ENCODE measurements at regions of chr1 and their contacts with region 1.

Region 1: GRCh38 chr1:30911046-30911954 is 2.7 kb upstream of the SDC3 start:
- DNase-seq: peak; percentile 55 to 92
- H3K4me3 ChIP-seq: no peak overlapping the region
- H3K27ac ChIP-seq: no peak overlapping the region
- H3K4me1 ChIP-seq: peaks cover 6 to 14% of the 10 kb centered on the region in 2 donors
- H3K27me3 ChIP-seq: no peaks in the 10 kb centered on the region
- CTCF ChIP-seq: peak; percentile 85 to 89 (median 88)

Region 2: DNA sequence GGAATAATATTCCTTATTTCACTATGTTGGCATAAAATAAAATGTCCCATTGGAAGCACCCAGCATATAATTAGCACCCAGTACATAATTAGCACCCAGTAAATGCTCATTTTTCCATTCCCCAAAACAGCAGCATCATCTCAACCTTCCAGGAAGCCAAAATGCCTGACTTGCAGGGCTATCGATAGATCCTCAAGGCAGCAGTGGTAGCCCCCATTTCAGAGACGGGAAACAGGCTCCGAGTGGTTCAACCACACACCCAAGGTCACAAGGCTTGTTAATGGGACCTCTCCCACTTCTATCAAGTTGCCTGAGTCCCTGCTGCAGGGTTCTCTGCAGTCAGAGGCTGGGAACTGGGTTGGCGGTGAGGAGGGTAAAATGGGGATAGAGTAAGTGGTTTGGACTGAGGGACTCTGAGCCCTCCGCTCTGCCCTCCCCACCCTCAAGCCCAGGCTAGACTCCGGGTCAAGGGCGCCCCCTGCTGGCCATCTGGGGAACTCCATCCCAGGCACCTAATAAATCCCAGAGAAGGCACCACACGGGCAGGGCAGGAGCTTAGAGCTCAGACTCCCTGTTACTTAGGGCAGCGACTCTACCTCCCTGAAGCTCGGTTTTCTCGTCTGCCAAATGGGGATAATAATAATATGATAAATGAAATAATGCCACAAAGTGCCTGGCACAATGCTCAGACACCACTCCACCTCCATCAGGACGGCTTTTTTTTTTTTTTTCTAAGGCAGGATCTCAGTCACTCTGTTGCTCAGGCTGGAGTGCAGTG is 131.8 kb before region 1 on chr1:
- intact Hi-C with region 1: loop called (anchors 1 kb)
- DNase-seq: peak; percentile 72 to 93
- H3K4me3 ChIP-seq: no peak overlapping the region
- H3K27ac ChIP-seq: no peak overlapping the region
- H3K4me1 ChIP-seq: peaks cover 0 to 2% of the 10 kb centered on the region in 2 donors
- H3K27me3 ChIP-seq: no peaks in the 10 kb centered on the region
- CTCF ChIP-seq: peak; percentile 94 to 98 (median 94)

Region 3: GRCh38 chr1:30801771-30802198 is 109.5 kb before region 1 on chr1:
- intact Hi-C with region 1: loop called (anchors 1 kb)
- DNase-seq: peak in 1 of 2 donors; percentile 89
- H3K4me3 ChIP-seq: peak overlapping the region in 1 of 2 donors; percentile 38
- H3K27ac ChIP-seq: no peak overlapping the region
- H3K4me1 ChIP-seq: no peaks in the 10 kb centered on the region
- H3K27me3 ChIP-seq: no peaks in the 10 kb centered on the region
- CTCF ChIP-seq: peak; percentile 94 to 98 (median 95)

Region 4: DNA sequence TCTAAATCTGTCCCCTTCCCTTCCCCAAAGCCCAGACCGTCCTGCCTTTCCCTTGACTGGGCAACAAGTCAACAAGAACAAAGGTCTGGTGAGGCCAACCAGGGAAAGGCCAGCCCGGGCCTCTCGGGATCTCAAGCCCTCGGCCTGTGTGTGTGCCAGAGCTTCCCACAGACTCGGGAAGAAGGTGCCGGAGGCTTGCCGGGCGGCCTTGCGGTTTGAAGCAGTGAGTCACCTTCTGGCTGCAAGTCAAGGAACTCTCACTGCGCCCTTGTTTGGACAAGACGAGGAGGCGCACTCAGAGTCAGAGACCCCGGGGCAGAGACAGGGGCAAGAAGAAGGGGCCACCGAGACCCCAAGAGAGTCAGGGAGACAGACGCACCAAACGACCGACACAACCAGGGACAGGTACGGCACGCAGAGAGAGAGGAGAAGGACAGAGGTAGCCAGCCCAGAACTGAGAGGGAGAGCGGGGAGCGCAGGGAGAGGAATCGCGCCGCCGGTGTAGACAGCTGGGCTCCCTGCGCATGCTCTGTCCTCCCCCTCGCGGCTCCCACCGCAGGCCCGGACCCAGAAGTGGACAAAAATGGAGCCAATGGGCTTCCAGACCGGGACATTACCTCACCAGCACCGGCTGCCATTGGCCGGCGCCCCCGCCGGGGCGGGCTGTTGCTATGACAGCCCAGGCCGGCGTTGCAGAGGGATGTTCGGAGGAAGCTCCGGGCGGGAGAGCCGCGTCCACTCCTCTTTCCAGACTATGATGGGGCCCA is 87.1 kb before region 1 on chr1:
- intact Hi-C with region 1: loop called (anchors 1 kb)
- DNase-seq: peak; percentile 87 to 98
- H3K4me3 ChIP-seq: peak overlapping the region; percentile 46 to 58
- H3K27ac ChIP-seq: peak overlapping the region; percentile 95
- H3K4me1 ChIP-seq: peaks cover 4 to 13% of the 10 kb centered on the region in 2 donors
- H3K27me3 ChIP-seq: no peaks in the 10 kb centered on the region
- CTCF ChIP-seq: peak in 1 of 3 experiments; percentile 5

Region 5: GRCh38 chr1:30877205-30877912 is 33.9 kb before region 1 on chr1:
- intact Hi-C with region 1: loop called (anchors 5 kb)
- DNase-seq: peak; percentile 57 to 92
- H3K4me3 ChIP-seq: no peak overlapping the region
- H3K27ac ChIP-seq: peak overlapping the region; percentile 56 to 79
- H3K4me1 ChIP-seq: peaks cover 7 to 33% of the 10 kb centered on the region in 2 donors
- H3K27me3 ChIP-seq: no peaks in the 10 kb centered on the region
- CTCF ChIP-seq: no peak

Region 6: GRCh38 chr1:30888391-30888790 is 22.9 kb before region 1 on chr1:
- intact Hi-C with region 1: loop called (anchors 1 kb)
- DNase-seq: peak; percentile 56 to 94
- H3K4me3 ChIP-seq: peak overlapping the region in 1 of 2 donors; percentile 3
- H3K27ac ChIP-seq: peak overlapping the region; percentile 93 to 97
- H3K4me1 ChIP-seq: peaks cover 12 to 52% of the 10 kb centered on the region in 2 donors
- H3K27me3 ChIP-seq: no peaks in the 10 kb centered on the region
- CTCF ChIP-seq: no peak

Region 7: GRCh38 chr1:30933874-30934252 is 22.6 kb after region 1 on chr1:
- intact Hi-C with region 1: no loop called
- DNase-seq: no peak
- H3K4me3 ChIP-seq: no peak overlapping the region
- H3K27ac ChIP-seq: no peak overlapping the region
- H3K4me1 ChIP-seq: no peaks in the 10 kb centered on the region
- H3K27me3 ChIP-seq: no peaks in the 10 kb centered on the region
- CTCF ChIP-seq: no peak

Region 8: DNA sequence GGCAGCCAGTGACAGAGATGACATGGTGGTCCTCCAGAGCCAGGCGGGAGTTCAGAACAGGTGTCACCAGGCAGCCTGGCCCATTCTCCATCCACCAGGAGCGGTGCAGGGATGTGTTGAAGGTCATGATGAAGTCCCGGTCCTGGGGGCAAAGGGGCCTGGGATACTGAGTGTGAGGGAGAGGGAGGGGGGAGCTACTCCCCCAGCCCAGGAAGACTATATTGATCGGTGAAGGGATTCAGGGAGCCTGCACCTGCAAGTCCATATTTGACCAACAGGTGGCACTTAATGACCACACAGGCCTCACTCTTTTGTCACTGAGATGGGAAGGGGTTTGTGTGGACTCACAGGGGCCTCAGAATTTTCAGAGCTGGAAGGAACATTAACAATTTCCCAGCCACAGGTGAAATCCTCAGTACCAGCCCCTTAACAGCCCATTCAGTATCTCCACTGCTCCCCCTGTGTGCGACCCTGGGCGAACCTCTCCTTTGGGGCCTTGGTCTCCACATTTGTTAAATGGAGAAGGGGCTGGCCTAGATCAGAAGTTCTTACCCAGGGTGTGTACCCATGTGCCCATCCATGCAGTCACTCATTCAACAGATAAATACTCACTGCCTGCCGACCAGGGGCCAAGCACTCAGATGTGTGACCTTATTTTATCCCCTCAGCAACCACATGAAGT is 272.7 kb after region 1 on chr1:
- intact Hi-C with region 1: no loop called
- DNase-seq: no peak
- H3K4me3 ChIP-seq: no peak overlapping the region
- H3K27ac ChIP-seq: no peak overlapping the region
- H3K4me1 ChIP-seq: peaks cover 4% of the 10 kb centered on the region in 2 donors
- H3K27me3 ChIP-seq: no peaks in the 10 kb centered on the region
- CTCF ChIP-seq: peak; percentile 27 to 70 (median 50)